ENCODE measurements at regions of chr14 and their contacts with region 1.

Region 1: DNA sequence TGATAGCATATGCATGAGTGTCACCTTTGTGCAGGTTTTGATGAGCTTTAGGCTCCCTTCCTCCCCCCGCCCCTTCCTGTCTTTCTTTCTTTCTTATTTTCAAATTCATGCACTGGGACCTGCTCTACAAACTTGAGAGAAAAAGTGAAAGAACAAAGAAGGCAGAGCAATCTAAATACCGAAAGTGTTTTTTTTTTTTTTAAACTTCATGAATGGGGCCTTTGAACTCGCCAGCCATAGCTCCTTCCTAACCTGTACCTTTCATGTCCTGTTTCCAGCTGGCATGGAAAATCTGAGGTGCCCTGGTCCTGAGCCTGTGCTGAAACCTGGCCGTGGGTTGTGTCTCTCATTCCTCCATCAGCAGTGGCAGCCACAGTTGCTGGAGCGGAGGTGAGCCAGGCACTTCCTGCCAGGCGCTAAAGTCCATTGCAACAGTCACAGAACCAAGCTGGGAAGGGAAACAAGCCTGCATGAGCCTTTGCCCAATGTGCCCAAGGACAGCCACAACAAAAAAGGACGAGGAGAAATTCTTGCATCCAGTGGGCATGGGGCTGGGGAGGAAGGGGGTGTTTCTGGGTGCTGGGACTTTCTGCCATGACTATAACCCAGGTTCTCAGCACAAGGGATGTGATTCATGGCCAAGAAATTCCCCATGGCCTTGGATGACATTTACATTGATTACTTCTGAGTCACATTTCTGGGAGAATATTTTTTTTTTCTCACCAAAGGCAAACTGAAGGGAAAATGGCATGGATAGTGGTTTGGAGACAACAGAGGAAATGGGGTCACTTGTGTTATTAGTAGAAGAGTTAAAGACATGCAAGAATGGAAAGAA is 102.7 kb downstream of the TMEM30B start:
- DNase-seq: peak; percentile 81
- H3K4me3 Mint-ChIP-seq: peak overlapping the region; percentile 55
- H3K27ac Mint-ChIP-seq: peak overlapping the region; percentile 92
- H3K4me1 Mint-ChIP-seq: peaks cover 54% of the 10 kb centered on the region
- H3K27me3 Mint-ChIP-seq: no peaks in the 10 kb centered on the region

Region 2: GRCh38 chr14:60679566-60680258 is 498.7 kb before region 1 on chr14:
- CTCF ChIA-PET with region 1: no interaction called
- POLR2A ChIA-PET with region 1: no interaction called
- intact Hi-C with region 1: no loop called
- DNase-seq: no peak
- H3K4me3 Mint-ChIP-seq: no peak overlapping the region
- H3K27ac Mint-ChIP-seq: no peak overlapping the region
- H3K4me1 Mint-ChIP-seq: no peaks in the 10 kb centered on the region
- H3K27me3 Mint-ChIP-seq: peaks cover 10% of the 10 kb centered on the region

Region 3: DNA sequence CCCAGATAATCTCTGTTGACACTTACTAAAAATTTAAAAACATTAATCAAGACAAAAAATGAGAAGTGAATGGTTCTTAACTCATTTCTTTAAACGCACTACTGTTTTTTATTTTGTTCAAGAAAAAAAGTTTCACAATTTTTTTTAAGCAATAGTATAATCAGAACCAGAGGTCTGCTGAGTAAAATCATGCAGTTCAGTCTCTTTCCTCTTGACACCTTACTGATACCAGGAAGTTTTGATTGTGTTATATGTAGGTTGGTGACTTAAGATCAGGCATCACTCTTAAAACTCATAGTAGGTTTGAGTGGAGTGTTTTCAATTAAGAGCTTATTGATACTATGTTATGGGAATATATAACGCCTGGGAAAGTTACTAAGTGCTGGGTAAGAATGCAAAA is 318.9 kb before region 1 on chr14:
- CTCF ChIA-PET with region 1: no interaction called
- POLR2A ChIA-PET with region 1: no interaction called
- intact Hi-C with region 1: loop called (anchors 1 kb)
- DNase-seq: no peak
- H3K4me3 Mint-ChIP-seq: no peak overlapping the region
- H3K27ac Mint-ChIP-seq: no peak overlapping the region
- H3K4me1 Mint-ChIP-seq: peaks cover 22% of the 10 kb centered on the region
- H3K27me3 Mint-ChIP-seq: no peaks in the 10 kb centered on the region

Region 4: DNA sequence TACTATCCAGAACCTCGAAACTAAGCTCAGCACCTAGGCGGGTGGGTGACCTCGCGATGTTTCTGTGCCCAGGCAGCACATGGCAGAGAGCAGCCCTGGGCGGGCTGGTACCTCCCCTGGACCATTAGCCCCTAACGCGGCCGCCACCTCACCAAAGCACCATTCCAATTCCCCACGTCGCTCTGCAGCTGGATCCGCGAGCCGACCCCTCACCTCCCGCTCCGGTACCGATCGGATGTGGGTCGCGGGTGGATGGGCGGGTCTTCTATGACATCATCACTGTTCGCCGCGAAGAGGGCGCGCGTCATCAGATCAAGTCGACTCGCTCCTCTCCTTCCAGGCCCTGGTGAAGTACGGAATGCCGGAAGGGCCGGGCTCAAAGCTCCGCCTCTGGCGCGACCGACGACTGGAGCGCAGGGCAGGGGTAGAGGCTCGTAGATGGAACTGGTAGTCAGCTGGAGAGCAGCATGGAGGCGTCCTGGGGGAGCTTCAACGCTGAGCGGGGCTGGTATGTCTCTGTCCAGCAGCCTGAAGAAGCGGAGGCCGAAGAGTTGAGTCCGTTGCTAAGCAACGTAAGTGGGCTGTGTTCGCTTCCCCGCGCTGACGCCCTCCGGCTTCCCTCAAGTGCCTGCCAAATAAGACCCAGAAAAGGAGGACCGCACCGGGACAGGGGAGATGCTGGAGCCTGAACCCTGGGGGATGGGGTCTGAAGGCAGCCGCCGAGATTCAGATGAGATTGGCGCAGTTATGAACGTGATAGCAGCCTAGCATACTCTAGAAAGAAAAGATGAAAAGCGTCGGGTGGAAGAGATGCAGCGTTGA is 197.4 kb before region 1 on chr14 and contains the starts of genes SLC38A6 and TRMT5:
- CTCF ChIA-PET with region 1: no interaction called
- POLR2A ChIA-PET with region 1: no interaction called
- intact Hi-C with region 1: loop called (anchors 5 kb)
- DNase-seq: peak; percentile 95
- H3K4me3 Mint-ChIP-seq: no peak within 1 kb of the TSS
- H3K27ac Mint-ChIP-seq: no peak within 1 kb of the TSS
- H3K4me1 Mint-ChIP-seq: peaks cover 21% of the 10 kb centered on the region
- H3K27me3 Mint-ChIP-seq: no peaks in the 10 kb centered on the region
- total RNA-seq, gene SLC38A6: 5.4 to 5.6 TPM
- total RNA-seq, gene TRMT5: 18.2 to 18.3 TPM

Region 5: DNA sequence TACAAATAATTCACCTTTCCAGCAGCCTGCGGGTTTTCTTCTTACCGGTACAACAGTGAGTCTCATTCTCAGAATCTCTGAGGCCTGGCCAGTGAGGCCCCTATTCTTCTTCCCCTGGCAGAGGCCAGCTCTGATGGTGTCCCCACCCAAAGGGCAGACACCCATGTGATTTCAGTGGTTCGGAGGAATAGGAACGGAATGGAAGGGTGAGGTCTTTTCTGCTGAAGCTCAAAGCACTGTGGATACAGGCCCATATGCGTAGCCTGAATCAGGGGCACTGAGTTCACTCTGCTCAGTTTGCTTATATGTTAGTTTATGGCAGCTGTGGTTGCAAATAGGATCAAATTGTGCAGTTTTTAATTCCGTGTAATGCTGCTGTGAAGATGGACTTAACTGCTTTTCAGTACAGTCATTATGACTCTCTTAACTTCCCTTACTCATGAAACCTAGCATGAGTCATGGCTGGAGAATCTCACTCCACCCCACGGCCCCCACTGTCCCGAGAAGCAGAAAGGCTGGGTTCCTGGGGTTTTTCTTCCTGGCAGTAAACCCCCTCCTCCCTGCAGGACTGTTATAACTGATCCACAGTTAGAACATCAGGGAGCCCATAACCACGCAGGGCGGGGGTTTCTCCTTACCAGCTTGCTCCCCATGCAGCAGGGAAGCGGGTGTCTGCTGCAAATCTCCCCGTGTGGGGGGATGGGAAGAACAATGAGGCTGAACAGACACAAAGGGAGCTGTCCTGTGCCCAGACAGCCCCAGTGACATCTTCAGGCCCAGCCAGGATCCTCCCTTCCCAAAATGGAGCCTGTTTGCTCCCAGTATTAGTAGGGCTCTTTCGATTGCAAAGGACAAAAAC is 74.7 kb before region 1 on chr14:
- CTCF ChIA-PET with region 1: no interaction called
- POLR2A ChIA-PET with region 1: no interaction called
- intact Hi-C with region 1: loop called (anchors 1 kb)
- DNase-seq: peak; percentile 71
- H3K4me3 Mint-ChIP-seq: no peak overlapping the region
- H3K27ac Mint-ChIP-seq: peak overlapping the region; percentile 81
- H3K4me1 Mint-ChIP-seq: peaks cover 30% of the 10 kb centered on the region
- H3K27me3 Mint-ChIP-seq: no peaks in the 10 kb centered on the region

Region 6: DNA sequence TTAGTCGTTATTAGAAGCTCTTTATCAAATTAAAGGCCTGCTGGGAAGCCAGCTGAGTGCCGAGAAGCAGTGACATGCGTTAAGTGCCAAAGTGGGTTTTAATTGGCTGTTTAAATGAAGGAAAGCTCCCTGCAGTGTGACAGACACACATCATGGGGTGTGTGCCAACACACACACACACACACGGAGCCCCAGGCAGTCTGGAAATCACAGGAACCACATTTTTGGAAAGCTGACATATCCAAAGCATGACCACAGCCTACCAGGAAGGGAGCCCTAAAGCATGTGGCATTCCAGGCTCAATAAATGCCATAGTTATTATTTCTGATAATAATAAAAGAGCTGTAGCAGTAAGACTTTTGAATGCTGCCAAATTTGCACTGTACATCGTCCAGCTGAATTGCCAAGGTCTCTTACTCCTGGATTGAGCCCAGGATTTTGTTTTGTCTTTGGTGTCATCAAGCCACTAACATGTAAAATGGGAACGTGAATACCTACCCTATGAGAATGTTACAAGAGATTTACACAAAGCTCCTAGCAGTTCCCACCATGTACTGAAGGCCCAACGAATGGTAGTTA is 32.5 kb before region 1 on chr14:
- CTCF ChIA-PET with region 1: no interaction called
- POLR2A ChIA-PET with region 1: no interaction called
- intact Hi-C with region 1: no loop called
- DNase-seq: no peak
- H3K4me3 Mint-ChIP-seq: no peak overlapping the region
- H3K27ac Mint-ChIP-seq: no peak overlapping the region
- H3K4me1 Mint-ChIP-seq: no peaks in the 10 kb centered on the region
- H3K27me3 Mint-ChIP-seq: peaks cover 8% of the 10 kb centered on the region

Region 7: DNA sequence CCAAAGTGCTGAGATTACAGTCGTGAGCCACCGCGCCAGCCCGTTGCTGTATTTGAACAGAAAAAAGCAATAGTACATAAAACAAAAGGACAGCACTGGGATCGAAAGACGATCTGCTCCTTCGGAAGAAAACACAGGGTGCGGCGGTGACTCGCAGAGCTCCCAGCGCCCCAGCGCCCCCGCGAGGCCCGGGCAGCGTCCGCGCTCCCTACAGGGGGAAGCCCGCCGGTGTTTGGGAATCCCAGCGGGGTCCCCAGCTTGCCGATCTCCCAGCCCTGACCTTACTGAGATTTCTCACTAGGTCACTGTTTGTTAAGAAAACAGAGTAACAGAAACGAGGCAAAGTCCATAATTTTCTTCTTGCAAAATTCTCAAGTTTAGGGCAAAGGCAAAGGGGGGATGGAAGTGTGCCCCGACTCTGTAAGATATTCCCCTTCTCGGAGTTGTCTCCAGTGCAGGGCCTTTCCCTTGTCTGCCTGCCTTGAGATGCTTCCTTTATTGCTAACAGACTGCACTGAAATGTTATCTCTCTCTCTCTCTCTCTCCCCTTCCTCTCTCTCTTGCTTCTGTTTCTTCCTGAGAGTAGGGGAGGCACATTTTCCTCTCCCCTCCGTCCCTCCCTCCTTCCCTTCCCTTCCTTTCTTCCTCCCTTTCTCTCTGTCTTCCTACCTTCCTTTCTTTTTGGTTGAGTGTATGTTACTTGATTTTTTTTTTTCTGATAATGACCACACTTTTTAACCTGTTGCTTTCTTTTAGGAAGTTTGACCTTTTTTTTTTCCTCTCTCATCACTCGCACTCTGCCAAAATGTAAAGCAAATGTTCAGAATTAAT is 10.8 kb after region 1 on chr14:
- CTCF ChIA-PET with region 1: no interaction called
- POLR2A ChIA-PET with region 1: no interaction called
- intact Hi-C with region 1: loop called (anchors 1 kb)
- DNase-seq: peak; percentile 69
- H3K4me3 Mint-ChIP-seq: peak overlapping the region; percentile 70
- H3K27ac Mint-ChIP-seq: no peak overlapping the region
- H3K4me1 Mint-ChIP-seq: peaks cover 13% of the 10 kb centered on the region
- H3K27me3 Mint-ChIP-seq: peaks cover 32% of the 10 kb centered on the region

Region 8: GRCh38 chr14:61213191-61213621 is 34.8 kb after region 1 on chr14:
- CTCF ChIA-PET with region 1: no interaction called
- POLR2A ChIA-PET with region 1: no interaction called
- intact Hi-C with region 1: no loop called
- DNase-seq: no peak
- H3K4me3 Mint-ChIP-seq: no peak overlapping the region
- H3K27ac Mint-ChIP-seq: no peak overlapping the region
- H3K4me1 Mint-ChIP-seq: no peaks in the 10 kb centered on the region
- H3K27me3 Mint-ChIP-seq: peaks cover 14% of the 10 kb centered on the region

Region 9: DNA sequence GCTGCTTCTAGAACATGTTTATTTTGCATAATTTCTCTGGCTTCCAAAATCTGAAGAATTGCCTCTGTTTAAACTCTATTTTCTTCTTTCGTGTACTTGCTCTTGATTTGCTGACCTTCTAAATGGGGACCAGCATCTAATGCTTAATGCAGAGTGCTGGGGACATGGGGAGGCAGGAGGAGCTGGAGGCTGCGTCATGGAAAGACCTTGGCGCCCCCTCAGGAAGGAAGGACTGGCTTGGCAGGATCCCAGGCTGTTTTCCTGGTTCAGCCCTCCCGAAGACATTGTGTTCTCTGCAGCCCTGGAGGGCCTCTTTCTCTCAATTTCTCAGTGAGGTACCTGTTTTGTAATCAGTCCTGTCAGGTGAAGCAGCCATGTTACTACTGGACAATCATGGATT is 148.4 kb after region 1 on chr14:
- CTCF ChIA-PET with region 1: no interaction called
- POLR2A ChIA-PET with region 1: no interaction called
- intact Hi-C with region 1: loop called (anchors 5 kb)
- DNase-seq: no peak
- H3K4me3 Mint-ChIP-seq: peak overlapping the region; percentile 99
- H3K27ac Mint-ChIP-seq: peak overlapping the region; percentile 93
- H3K4me1 Mint-ChIP-seq: peaks cover 64% of the 10 kb centered on the region
- H3K27me3 Mint-ChIP-seq: no peaks in the 10 kb centered on the region

Measured in activated CD4-positive, alpha-beta memory T cell treated with anti-CD3 and anti-CD28 coated beads for 36 hours (primary cell).